ENCODE measurements at regions of chr1 and their contacts with region 1.

Region 1: GRCh38 chr1:218683242-218683641 is 338.1 kb downstream of the TGFB2 start:
- DNase-seq: no peak
- H3K4me3 ChIP-seq: no peak overlapping the region
- CTCF ChIP-seq: no peak

Region 2: DNA sequence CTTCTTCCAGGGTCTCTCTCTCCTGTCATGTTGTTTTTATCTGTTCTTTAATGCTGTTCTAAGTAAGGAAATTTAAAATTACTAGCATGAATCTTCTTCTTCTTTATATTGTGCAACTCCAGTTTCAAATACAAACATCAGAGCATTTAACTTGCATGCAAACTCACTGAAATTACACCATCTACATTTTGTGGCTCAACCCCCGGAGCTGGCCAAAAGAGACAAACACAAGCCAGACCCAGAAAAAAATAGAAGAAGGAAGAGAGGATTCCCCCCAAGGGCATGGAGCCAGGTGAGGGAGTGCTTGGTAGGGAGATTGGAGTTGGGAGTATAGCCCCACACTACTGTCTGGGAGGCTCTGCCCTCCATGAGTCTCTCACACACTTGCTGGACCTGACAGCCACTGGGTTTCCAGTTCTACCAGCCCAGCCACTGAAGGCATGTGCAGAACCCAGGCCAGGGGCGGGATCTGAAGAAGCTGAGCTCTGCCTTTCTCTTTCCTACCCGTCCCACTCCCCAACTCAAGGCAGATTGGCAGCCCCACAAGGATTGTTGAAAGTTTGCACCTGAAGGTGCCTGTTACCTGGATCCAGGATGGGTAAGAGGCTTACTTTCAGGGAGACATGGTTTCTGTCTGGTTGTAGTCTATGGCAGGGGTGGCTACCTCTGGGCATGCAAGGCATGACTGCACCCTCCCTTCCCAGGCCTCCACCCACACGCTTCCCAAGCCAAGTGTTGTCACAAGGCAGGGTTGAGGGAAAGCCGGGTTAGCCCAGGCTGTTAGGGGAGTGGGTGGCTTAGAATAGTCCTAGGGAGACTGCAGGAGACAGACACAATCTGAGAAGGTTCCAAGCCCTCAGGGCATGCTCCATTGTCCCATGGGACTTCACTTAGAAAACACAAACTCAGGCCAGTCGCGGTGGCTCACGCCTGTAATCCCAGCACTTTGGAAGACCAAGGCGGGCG is 40.9 kb before region 1 on chr1:
- CTCF ChIA-PET with region 1: no interaction called
- POLR2A ChIA-PET with region 1: no interaction called
- DNase-seq: no peak
- H3K4me3 ChIP-seq: no peak overlapping the region
- CTCF ChIP-seq: no peak

Region 3: GRCh38 chr1:218694636-218695035 is 11.4 kb after region 1 on chr1:
- CTCF ChIA-PET with region 1: interaction called, 14 read pairs
- POLR2A ChIA-PET with region 1: no interaction called
- DNase-seq: no peak
- H3K4me3 ChIP-seq: no peak overlapping the region
- CTCF ChIP-seq: no peak